CD4-positive, alpha-beta memory T cell (primary cell): ENCODE measurements at regions of chr10 and their contacts with region 1.

Region 1: DNA sequence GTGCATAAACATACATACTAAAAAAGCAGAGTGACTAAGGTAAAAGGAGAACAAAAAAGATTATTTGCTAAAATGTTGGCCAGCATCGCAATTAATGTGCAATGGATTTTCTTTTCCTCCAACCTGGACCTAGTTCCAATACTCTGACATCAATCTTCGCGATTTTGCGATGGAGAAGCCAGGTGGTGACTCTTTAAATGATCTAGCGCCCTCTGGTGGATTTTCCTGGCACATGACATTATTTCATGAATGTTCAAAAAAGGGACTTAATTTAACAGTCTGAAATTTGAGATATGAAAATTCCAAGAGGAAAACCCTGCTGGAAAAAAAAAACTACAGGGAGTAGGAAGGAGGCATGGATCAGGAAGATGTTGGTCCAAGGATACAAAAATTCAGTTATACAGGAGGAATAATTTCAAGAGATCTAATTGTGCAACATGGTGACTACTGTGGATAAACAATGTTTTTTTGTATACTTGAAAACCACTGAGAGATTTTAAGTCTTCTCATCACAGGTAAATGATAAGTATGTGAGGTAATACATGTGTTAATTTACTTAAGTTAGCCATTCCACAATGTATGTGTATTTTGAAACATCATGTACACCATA is 4.3 kb upstream of the KCNMA1 start:
- DNase-seq: peak in 4 of 5 donors; percentile 24 to 41 (median 36)
- H3K4me3 ChIP-seq: no peak overlapping the region
- H3K4me3 Mint-ChIP-seq: peak overlapping the region in 1 of 8 donors; percentile 49
- H3K27ac ChIP-seq: no peak overlapping the region
- H3K27ac Mint-ChIP-seq: no peak overlapping the region
- H3K4me1 ChIP-seq: no peaks in the 10 kb centered on the region
- H3K4me1 Mint-ChIP-seq: peaks cover 2 to 21% (median 10%) of the 10 kb centered on the region in 4 donors
- H3K27me3 ChIP-seq: peaks cover 5% of the 10 kb centered on the region
- H3K27me3 Mint-ChIP-seq: peaks cover 32 to 35% of the 10 kb centered on the region in 2 donors

Region 2: GRCh38 chr10:77165445-77166208 is 476.3 kb before region 1 on chr10:
- CTCF ChIA-PET with region 1: interaction called, 51 read pairs
- POLR2A ChIA-PET with region 1: no interaction called
- intact Hi-C with region 1: loop called (anchors 2 kb)
- DNase-seq: peak in 4 of 5 donors; percentile 6 to 24 (median 20)
- H3K4me3 ChIP-seq: no peak overlapping the region
- H3K4me3 Mint-ChIP-seq: peak overlapping the region in 6 of 8 donors; percentile 10 to 66 (median 55)
- H3K27ac ChIP-seq: no peak overlapping the region
- H3K27ac Mint-ChIP-seq: no peak overlapping the region
- H3K4me1 ChIP-seq: no peaks in the 10 kb centered on the region
- H3K4me1 Mint-ChIP-seq: peaks cover 0 to 6% (median 1%) of the 10 kb centered on the region in 4 donors
- H3K27me3 ChIP-seq: peaks cover 7% of the 10 kb centered on the region
- H3K27me3 Mint-ChIP-seq: peaks cover 10 to 12% of the 10 kb centered on the region in 2 donors

Region 3: GRCh38 chr10:77173615-77174461 is 468.1 kb before region 1 on chr10:
- CTCF ChIA-PET with region 1: interaction called, 77 read pairs
- POLR2A ChIA-PET with region 1: interaction called, 3 read pairs
- intact Hi-C with region 1: no loop called
- DNase-seq: peak; percentile 29 to 47 (median 39)
- H3K4me3 ChIP-seq: no peak overlapping the region
- H3K4me3 Mint-ChIP-seq: no peak overlapping the region
- H3K27ac ChIP-seq: no peak overlapping the region
- H3K27ac Mint-ChIP-seq: no peak overlapping the region
- H3K4me1 ChIP-seq: no peaks in the 10 kb centered on the region
- H3K4me1 Mint-ChIP-seq: no peaks in the 10 kb centered on the region
- H3K27me3 ChIP-seq: no peaks in the 10 kb centered on the region
- H3K27me3 Mint-ChIP-seq: peaks cover 3 to 14% of the 10 kb centered on the region in 2 donors